ENCODE measurements at regions of chrX and their contacts with region 1.

Region 1: GRCh38 chrX:38985375-38985774 is 184.1 kb downstream of the MID1IP1 start:
- DNase-seq: no peak
- H3K4me3 Mint-ChIP-seq: no peak overlapping the region
- H3K27ac Mint-ChIP-seq: no peak overlapping the region
- H3K4me1 Mint-ChIP-seq: no peaks in the 10 kb centered on the region
- H3K27me3 Mint-ChIP-seq: peaks cover 2% of the 10 kb centered on the region

Region 2: GRCh38 chrX:38664285-38664684 is 321.1 kb before region 1 on chrX:
- intact Hi-C with region 1: loop called (anchors 10 kb)
- DNase-seq: no peak
- H3K4me3 Mint-ChIP-seq: no peak overlapping the region
- H3K27ac Mint-ChIP-seq: no peak overlapping the region
- H3K4me1 Mint-ChIP-seq: no peaks in the 10 kb centered on the region
- H3K27me3 Mint-ChIP-seq: peaks cover 2% of the 10 kb centered on the region

Region 3: DNA sequence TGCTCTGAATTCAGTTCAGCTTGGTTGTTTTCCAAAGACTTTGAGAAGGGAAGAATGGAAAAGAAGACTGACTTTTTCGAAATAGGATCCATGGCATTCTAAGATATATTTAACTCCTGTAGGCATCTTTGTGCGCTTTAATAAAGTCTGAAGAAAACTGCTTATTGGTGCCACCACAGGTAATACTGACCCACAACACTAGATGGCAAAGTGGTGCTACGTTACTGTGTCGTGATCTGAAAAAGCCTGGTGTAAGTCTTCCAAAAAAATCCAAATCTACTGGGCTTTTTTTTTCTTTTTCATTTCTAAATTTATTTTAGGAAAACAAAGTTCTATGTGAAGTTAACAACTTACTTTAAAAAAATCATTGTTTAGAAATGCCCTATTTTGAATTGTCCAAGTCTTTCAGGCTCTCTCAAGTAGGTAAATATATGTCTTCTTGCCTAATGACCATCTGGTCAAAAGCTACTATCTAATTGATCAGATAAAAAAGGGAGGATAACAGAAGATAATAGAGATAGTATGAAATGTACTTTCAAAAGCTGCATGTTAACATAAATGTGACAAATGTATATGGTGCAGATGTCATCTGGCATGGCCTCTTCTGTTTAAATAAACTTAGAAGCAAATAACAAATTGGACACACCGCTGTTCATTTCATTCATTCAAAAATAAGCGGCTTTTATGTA is 231.1 kb before region 1 on chrX:
- intact Hi-C with region 1: loop called (anchors 1 kb)
- DNase-seq: no peak
- H3K4me3 Mint-ChIP-seq: no peak overlapping the region
- H3K27ac Mint-ChIP-seq: no peak overlapping the region
- H3K4me1 Mint-ChIP-seq: no peaks in the 10 kb centered on the region
- H3K27me3 Mint-ChIP-seq: peaks cover 3% of the 10 kb centered on the region

Region 4: GRCh38 chrX:38768079-38768478 is 217.3 kb before region 1 on chrX:
- intact Hi-C with region 1: loop called (anchors 1 kb)
- DNase-seq: no peak
- H3K4me3 Mint-ChIP-seq: no peak overlapping the region
- H3K27ac Mint-ChIP-seq: no peak overlapping the region
- H3K4me1 Mint-ChIP-seq: no peaks in the 10 kb centered on the region
- H3K27me3 Mint-ChIP-seq: no peaks in the 10 kb centered on the region